Colonic mucosa (tissue), 4 donors: ENCODE measurements at regions of chr6 and their contacts with region 1.

Region 1: GRCh38 chr6:33248925-33249731 is 22.5 kb downstream of the VPS52 start:
- DNase-seq: peak; percentile 98
- H3K4me3 ChIP-seq: peak overlapping the region; percentile 54
- H3K27ac ChIP-seq: peak overlapping the region; percentile 91
- H3K4me1 ChIP-seq: peaks cover 5% of the 10 kb centered on the region
- H3K27me3 ChIP-seq: no peaks in the 10 kb centered on the region
- CTCF ChIP-seq: no peak

Region 2: DNA sequence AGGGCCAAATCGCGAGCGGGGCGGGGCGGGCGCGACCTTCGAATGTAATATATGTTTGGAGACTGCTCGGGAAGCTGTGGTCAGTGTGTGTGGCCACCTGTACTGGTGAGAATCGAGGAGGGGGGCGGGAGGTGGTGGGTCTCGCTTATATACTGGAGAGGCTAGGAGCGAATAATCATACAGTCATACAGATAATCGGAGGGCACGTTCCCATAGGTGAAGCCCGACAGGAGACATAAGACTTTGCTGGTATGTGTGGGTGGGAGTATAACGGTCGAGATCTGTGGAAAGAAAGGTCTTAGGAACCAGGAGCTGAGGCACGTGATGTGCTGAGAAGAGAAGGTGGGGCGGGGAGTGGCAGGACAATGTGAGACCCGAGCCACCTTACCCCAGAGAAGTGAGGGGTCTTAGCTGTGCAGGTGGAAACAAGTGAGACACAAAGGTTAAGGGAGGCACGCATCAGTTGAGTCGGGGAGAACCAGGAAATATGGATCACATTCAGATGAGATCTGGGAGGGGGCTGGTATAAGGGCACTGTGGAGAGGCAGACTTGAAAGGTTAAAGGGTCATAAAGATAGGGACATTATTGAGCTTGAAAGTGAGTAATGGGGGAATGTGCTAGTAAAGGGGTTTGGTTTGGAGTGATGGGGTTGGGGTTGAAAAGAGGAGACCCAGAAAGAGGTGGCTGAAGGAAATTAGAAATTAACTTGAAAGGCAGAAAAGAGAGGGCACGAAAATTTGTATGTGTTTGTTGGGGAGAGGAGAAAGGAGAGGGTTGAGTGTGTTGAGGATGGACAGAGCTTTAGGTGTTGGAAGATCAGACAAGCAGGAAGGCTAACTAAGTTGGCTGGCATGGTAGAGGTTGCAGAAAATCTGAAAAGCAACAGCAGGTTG is 1070.3 kb before region 1 on chr6:
- intact Hi-C with region 1: no loop called
- DNase-seq: no peak
- H3K4me3 ChIP-seq: peak overlapping the region; percentile 77
- H3K27ac ChIP-seq: peak overlapping the region; percentile 94
- H3K4me1 ChIP-seq: peaks cover 19% of the 10 kb centered on the region
- H3K27me3 ChIP-seq: no peaks in the 10 kb centered on the region
- CTCF ChIP-seq: no peak

Region 3: GRCh38 chr6:33014841-33015634 is 234.1 kb before region 1 on chr6:
- intact Hi-C with region 1: loop called (anchors 2 kb)
- DNase-seq: peak; percentile 68
- H3K4me3 ChIP-seq: no peak overlapping the region
- H3K27ac ChIP-seq: no peak overlapping the region
- H3K4me1 ChIP-seq: peaks cover 4% of the 10 kb centered on the region
- H3K27me3 ChIP-seq: no peaks in the 10 kb centered on the region
- CTCF ChIP-seq: peak; percentile 73

Region 4: DNA sequence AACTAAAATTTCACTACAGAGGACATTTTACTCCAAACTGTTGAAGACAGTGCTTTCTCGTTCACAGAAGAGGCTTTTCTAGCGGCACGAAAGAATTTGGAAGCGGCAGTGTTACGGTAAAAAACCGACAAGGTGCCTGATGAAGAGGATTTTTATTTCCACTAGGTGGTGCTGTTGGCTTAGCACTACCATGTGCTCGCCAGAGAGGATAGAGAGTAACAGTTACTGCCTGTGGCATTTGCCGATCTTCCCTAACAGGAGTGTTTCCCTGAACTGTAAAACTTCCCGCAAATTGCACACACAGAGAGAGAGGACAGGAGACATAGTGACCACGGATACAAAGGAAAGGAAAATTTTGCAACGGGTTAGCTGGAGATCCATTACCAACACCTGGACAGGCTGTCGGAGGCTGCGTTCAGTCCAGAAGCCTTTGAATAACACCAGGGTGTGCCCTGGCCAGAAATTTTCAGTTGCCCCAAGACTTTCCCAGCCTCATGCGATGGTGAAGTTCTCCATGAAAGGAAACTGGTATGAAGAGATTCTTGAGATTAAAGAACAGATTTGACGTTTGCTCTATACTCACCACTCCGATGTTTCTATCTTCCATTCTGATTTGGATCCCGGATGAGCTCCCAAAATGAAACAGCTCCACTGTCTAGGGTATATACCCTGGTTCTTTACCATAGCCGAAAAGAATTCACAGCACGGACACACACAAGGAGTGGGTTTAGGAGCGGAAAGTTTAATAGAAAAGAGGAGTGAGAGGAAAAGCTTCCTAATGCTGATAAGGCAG is 125.2 kb before region 1 on chr6:
- intact Hi-C with region 1: loop called (anchors 5 kb)
- DNase-seq: no peak
- H3K4me3 ChIP-seq: no peak overlapping the region
- H3K27ac ChIP-seq: no peak overlapping the region
- H3K4me1 ChIP-seq: no peaks in the 10 kb centered on the region
- H3K27me3 ChIP-seq: no peaks in the 10 kb centered on the region
- CTCF ChIP-seq: no peak

Region 5: DNA sequence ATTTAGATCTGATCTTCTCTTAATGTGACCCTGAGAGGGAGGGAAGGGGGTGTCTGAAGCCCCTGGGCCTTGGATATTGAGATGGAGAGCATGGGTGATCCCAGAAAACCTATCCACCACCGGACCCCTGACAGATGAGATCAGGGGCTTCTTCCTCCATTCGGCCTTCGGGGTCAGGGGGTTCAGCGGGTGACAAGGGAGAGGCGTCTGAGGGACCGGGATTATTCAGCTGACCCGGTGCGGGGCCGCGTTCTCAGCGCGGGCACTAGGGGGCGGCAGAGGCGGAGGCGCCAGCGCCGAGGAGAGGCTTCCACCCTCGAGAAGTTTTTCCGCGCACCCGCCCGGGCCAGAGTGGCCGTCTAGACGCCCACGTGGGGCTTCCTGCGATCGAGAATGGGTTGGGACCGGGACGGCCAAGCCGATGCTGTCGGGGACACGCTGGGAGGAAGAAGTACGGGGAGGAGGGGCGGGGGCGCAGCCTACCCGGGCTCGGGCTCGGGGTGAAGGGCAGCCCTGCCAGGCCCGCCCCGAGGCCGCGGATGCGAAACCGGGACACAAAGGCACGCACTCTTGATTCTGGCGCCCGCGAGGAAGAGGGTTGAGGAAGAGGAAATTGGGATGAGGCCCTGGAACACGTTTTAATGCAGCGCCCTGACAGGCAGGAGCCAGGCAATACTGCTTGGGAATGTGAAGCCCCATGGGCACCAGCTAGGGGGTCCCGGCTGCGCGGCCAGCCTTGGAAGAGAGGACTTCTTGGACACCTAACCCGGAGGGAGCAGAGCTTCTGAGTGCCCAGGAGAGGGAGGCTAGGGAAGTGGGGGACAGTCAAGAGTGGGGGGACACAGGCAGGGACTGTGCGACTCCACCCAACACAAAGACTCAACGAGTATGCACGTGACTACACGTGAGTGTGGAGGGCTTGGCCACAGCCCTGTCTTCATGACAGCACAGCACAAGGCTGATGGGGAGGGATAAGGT is 87.5 kb before region 1 on chr6:
- intact Hi-C with region 1: loop called (anchors 5 kb)
- DNase-seq: peak; percentile 85
- H3K4me3 ChIP-seq: peak overlapping the region; percentile 44
- H3K27ac ChIP-seq: peak overlapping the region; percentile 19
- H3K4me1 ChIP-seq: no peaks in the 10 kb centered on the region
- H3K27me3 ChIP-seq: no peaks in the 10 kb centered on the region
- CTCF ChIP-seq: peak; percentile 91